Heart right ventricle (tissue), 16 donors: ENCODE measurements at regions of chr11 and their contacts with region 1.

Region 1: GRCh38 chr11:118928108-118928870 is 2.6 kb upstream of the BCL9L start:
- DNase-seq: peak; percentile 89 to 94
- ATAC-seq: peak; percentile 73 to 86 (median 81)
- H3K4me3 ChIP-seq: peak overlapping the region; percentile 55 to 90 (median 76)
- H3K27ac ChIP-seq: peak overlapping the region; percentile 94 to 100 (median 97)
- H3K4me1 ChIP-seq: peaks cover 12 to 49% (median 37%) of the 10 kb centered on the region in 9 donors
- H3K27me3 ChIP-seq: no peaks in the 10 kb centered on the region
- CTCF ChIP-seq: peak; percentile 83 to 97 (median 94)

Region 2: GRCh38 chr11:118552341-118552740 is 375.9 kb before region 1 on chr11:
- intact Hi-C with region 1: no loop called
- DNase-seq: no peak
- ATAC-seq: no peak
- H3K4me3 ChIP-seq: no peak overlapping the region
- H3K27ac ChIP-seq: no peak overlapping the region
- H3K4me1 ChIP-seq: no peaks in the 10 kb centered on the region
- H3K27me3 ChIP-seq: no peaks in the 10 kb centered on the region
- CTCF ChIP-seq: no peak

Region 3: DNA sequence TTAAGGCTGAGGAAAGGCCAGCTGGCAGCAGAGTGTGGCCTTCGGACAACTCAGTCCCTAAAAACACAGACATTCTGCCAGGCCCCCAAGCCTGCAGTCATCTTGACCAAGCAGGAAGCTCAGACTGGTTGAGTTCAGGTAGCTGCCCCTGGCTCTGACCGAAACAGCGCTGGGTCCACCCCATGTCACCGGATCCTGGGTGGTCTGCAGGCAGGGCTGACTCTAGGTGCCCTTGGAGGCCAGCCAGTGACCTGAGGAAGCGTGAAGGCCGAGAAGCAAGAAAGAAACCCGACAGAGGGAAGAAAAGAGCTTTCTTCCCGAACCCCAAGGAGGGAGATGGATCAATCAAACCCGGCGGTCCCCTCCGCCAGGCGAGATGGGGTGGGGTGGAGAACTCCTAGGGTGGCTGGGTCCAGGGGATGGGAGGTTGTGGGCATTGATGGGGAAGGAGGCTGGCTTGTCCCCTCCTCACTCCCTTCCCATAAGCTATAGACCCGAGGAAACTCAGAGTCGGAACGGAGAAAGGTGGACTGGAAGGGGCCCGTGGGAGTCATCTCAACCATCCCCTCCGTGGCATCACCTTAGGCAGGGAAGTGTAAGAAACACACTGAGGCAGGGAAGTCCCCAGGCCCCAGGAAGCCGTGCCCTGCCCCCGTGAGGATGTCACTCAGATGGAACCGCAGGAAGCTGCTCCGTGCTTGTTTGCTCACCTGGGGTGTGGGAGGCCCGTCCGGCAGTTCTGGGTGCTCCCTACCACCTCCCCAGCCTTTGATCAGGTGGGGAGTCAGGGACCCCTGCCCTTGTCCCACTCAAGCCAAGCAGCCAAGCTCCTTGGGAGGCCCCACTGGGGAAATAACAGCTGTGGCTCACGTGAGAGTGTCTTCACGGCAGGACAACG is 32.9 kb before region 1 on chr11:
- intact Hi-C with region 1: loop called in 5 of 10 experiments (anchors 5 kb)
- DNase-seq: peak in 1 of 2 donors; percentile 3
- ATAC-seq: no peak
- H3K4me3 ChIP-seq: no peak overlapping the region
- H3K27ac ChIP-seq: peak overlapping the region in 1 of 10 donors; percentile 55
- H3K4me1 ChIP-seq: peaks cover 0 to 33% (median 0%) of the 10 kb centered on the region in 9 donors
- H3K27me3 ChIP-seq: no peaks in the 10 kb centered on the region
- CTCF ChIP-seq: no peak

Region 4: DNA sequence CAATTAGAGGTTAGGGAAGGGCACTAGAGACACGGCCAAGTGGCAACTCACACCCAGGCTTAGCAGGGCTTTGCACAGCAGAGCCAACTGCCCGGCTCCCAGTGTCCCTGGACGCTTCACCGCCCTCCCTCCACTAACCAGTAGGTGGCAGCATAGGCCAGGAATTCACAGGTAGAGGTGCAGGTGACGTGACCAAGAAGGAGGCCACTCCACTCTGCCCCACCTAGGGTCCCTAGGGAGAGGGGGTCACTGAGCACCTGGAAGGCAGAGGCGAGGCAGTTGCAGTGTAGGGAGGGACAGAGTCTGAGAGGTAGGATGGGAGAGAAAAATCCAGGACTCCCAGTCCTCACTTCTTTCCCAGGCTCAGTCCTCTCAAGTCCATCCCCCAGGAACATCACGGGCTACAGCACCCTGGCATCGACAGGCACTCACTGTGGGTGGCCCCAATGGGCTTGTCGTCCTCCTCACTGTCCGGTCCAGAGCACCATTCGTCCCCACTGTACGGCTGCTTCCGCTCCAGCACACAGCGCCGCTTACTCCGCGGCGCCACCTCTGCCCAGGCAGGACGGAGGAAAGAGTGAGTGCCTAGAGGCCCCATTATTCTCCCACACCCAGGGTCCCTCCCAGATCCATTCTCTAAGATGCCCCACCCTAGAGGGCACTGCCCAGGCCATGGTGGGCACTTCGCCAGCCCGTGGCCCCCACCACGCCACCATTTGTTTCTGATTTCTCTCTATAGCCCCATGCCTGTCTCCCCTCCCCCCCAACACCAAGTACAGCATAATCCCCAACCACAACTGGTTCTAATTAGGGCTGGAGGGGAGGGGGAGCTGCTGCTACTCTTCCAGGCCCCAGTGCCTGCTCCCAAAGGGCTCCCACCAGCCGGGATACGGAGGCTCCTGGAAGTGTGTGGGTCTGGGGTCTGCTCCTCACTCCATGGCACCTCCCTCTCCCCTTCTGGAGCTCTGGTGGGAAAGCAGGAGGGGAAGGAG is 20.9 kb before region 1 on chr11:
- intact Hi-C with region 1: loop called in 9 of 10 experiments (anchors 1 to 2 kb)
- DNase-seq: peak; percentile 81 to 89
- ATAC-seq: peak; percentile 34 to 70 (median 57)
- H3K4me3 ChIP-seq: no peak overlapping the region
- H3K27ac ChIP-seq: peak overlapping the region in 9 of 10 donors; percentile 20 to 98 (median 95)
- H3K4me1 ChIP-seq: peaks cover 33 to 67% (median 57%) of the 10 kb centered on the region in 9 donors
- H3K27me3 ChIP-seq: no peaks in the 10 kb centered on the region
- CTCF ChIP-seq: peak; percentile 73 to 96 (median 93)

Region 5: DNA sequence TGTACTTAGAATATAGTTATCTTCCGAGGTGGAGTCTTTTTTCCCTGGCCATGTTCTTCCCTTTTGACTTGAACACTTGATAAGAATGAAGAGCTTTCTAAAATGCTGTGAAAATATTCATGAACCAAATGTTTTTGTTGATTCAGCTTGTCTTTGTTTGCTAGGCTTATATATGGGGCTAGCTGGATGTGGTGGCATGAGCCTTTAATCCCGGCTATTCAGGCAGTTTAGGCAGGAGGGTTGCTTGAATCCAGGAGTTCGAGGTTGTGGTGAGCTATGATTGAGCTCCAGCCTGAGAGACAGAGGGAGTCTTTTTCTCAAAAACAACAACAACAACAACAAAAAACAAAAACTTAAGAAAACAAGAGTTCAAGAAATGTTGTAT is 301.0 kb after region 1 on chr11:
- intact Hi-C with region 1: no loop called
- DNase-seq: no peak
- ATAC-seq: no peak
- H3K4me3 ChIP-seq: no peak overlapping the region
- H3K27ac ChIP-seq: no peak overlapping the region
- H3K4me1 ChIP-seq: peaks cover 0 to 15% (median 0%) of the 10 kb centered on the region in 9 donors
- H3K27me3 ChIP-seq: no peaks in the 10 kb centered on the region
- CTCF ChIP-seq: no peak